ENCODE measurements at regions of chr12 and their contacts with region 1.

Region 1: GRCh38 chr12:47715393-47715876 is 9.6 kb upstream of the RPAP3 start:
- DNase-seq: peak; percentile 90

Region 2: GRCh38 chr12:47736877-47737676 is 21.6 kb after region 1 on chr12:
- intact Hi-C with region 1: no loop called
- DNase-seq: peak; percentile 97

Region 3: DNA sequence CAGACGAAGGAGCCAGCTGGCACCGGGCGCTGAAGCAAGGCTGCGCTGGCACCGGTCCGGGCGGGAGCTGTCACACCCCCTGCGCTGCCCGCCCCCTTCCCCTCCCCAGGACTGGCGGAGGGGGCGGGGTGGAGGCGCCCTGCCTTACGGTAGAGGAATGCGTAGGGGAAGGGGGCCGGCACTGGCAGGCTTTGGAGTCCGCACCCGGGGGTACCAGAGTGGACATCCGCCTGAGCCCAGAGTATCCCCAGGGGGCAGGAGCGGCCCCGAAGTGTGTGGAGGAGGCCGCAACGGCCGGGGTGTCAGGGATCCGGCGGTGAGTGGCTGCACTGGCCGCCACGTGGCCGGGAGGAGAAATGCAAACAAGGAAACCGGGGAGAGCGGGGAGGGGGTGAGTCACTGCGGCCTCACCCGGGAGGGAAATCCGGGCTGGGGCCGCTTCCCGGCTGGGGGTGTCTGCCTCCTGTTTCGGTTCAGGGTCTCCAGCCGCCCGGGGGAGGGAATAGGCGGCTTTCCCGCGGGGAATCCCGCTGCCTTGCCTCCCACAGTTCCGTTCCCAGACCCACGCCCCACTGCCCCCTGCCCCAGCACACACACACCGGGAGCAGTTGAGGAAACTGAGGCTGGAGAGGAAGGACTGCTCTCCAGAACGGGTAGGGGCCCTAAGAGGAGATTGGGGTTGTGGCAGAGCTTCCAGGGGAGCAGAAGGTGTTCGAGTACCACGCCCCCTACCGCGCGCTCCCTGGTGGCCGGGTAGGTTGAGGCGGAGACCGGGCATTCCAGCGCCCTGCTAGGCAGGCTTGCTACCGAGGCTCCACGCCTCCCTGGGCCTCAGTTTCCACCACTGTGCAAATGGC is 43.6 kb after region 1 on chr12 and contains the start of gene RAPGEF3:
- intact Hi-C with region 1: loop called in 1 of 2 experiments (anchors 1 kb)
- DNase-seq: peak; percentile 94
- total RNA-seq, gene RAPGEF3: 18.3 to 33.5 TPM

Region 4: GRCh38 chr12:47837190-47838171 is 122.0 kb after region 1 on chr12:
- intact Hi-C with region 1: loop called (anchors 5 to 10 kb)
- DNase-seq: peak; percentile 88